Ascending aorta (tissue), 2 donors: ENCODE measurements at regions of chr2 and their contacts with region 1.

Region 1: GRCh38 chr2:172102391-172103278 is at the start of gene DLX2:
- DNase-seq: peak; percentile 36 to 67
- H3K4me3 ChIP-seq: peak within 1 kb of the TSS; percentile 50 to 67
- H3K27ac ChIP-seq: no peak within 1 kb of the TSS
- H3K4me1 ChIP-seq: peaks cover 14 to 40% of the 10 kb centered on the region in 2 donors
- H3K27me3 ChIP-seq: peaks cover 62% of the 10 kb centered on the region
- CTCF ChIP-seq: no peak
- total RNA-seq, gene DLX2: not detected

Region 2: DNA sequence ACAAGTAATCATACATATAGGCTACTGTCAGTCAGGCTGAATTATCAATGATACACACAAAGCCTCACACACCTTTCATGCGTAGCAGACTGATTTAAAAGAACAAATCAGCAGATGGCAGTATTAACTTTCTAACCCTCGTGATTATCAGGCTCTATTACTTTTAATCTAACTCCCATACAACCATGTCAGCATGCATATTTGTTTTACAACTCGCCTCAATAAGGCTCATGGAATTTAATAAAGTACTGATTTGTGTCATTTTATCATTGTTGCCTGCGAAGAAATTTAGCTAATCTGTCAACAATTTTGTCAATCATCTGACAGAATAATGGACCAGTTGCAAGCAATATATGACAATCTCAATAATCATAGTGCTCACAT is 291.4 kb before region 1 on chr2:
- intact Hi-C with region 1: loop called (anchors 5 kb)
- DNase-seq: no peak
- H3K4me3 ChIP-seq: no peak overlapping the region
- H3K27ac ChIP-seq: no peak overlapping the region
- H3K4me1 ChIP-seq: no peaks in the 10 kb centered on the region
- H3K27me3 ChIP-seq: no peaks in the 10 kb centered on the region
- CTCF ChIP-seq: peak in 2 of 3 experiments; percentile 5 to 38

Region 3: GRCh38 chr2:172086241-172087206 is 16.1 kb before region 1 on chr2:
- intact Hi-C with region 1: loop called (anchors 2 kb)
- DNase-seq: no peak
- H3K4me3 ChIP-seq: peak overlapping the region in 1 of 2 donors; percentile 72
- H3K27ac ChIP-seq: no peak overlapping the region
- H3K4me1 ChIP-seq: peaks cover 5 to 13% of the 10 kb centered on the region in 2 donors
- H3K27me3 ChIP-seq: peaks cover 65% of the 10 kb centered on the region
- CTCF ChIP-seq: no peak

Region 4: GRCh38 chr2:172339371-172340010 is 236.9 kb after region 1 on chr2:
- intact Hi-C with region 1: no loop called
- DNase-seq: no peak
- H3K4me3 ChIP-seq: peak overlapping the region in 1 of 2 donors; percentile 8
- H3K27ac ChIP-seq: no peak overlapping the region
- H3K4me1 ChIP-seq: no peaks in the 10 kb centered on the region
- H3K27me3 ChIP-seq: no peaks in the 10 kb centered on the region
- CTCF ChIP-seq: no peak